ENCODE measurements at regions of chr18 and their contacts with region 1.

Region 1: DNA sequence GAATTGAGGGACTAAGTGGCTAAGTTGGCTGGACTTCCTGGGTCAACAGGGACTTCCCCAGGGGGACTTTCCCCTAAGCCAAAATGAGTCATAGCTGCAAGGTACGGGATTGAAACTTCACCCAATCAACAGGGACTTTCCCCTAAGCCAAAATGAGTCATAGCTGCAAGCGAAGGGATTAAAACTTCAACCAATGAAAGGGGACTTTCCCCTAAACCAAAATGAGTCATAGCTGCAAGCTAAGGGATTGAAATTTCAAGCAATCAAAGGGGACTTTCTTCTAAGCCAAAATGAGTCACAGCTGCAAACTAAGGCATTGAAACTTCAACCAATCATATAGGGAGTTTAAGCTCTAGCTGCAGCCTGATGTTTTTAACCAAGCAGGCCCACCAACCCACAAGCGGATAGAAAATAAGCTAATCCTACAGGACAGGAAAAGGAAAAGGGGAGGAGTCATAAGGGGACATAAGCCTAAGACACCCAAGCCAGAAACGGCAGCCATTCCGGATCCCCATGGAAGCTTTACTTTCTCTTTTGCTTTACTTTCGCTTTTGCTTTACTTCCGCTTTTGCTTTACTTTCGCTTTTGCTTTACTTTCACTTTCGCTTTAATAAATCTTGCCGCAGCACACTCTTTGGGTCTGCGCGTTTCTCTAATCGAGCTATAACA is 1375.4 kb upstream of the CELF4 start:
- DNase-seq: peak; percentile 89
- H3K4me3 Mint-ChIP-seq: peak overlapping the region; percentile 70
- H3K27ac Mint-ChIP-seq: peak overlapping the region; percentile 95
- H3K4me1 Mint-ChIP-seq: peaks cover 24% of the 10 kb centered on the region
- H3K27me3 Mint-ChIP-seq: no peaks in the 10 kb centered on the region

Region 2: DNA sequence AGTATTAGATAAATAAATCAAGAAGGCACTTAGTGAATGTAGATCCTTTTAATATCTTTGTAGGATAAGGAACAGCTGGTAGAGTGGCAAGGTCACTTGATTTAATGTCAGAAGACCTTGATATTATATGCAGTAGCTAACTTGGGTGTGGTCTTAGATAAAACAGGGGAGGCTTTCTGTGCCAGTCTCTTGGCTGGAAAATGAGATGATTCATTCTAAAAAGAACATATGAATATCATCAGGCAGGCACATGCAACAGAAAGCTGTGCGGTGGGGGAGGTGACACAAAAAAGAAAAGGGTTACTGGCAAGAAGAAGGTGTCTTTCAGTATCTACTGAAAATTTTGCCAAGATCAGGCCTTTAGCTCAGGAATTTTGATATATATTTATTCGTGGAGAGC is 443.7 kb before region 1 on chr18:
- intact Hi-C with region 1: loop called (anchors 2 kb)
- DNase-seq: no peak
- H3K4me3 Mint-ChIP-seq: no peak overlapping the region
- H3K27ac Mint-ChIP-seq: no peak overlapping the region
- H3K4me1 Mint-ChIP-seq: peaks cover 2% of the 10 kb centered on the region
- H3K27me3 Mint-ChIP-seq: no peaks in the 10 kb centered on the region

Region 3: GRCh38 chr18:38563396-38563980 is 377.5 kb before region 1 on chr18:
- intact Hi-C with region 1: loop called (anchors 5 kb)
- DNase-seq: no peak
- H3K4me3 Mint-ChIP-seq: no peak overlapping the region
- H3K27ac Mint-ChIP-seq: no peak overlapping the region
- H3K4me1 Mint-ChIP-seq: peaks cover 3% of the 10 kb centered on the region
- H3K27me3 Mint-ChIP-seq: no peaks in the 10 kb centered on the region

Region 4: GRCh38 chr18:38611036-38611964 is 329.7 kb before region 1 on chr18:
- intact Hi-C with region 1: loop called (anchors 1 kb)
- DNase-seq: peak; percentile 55
- H3K4me3 Mint-ChIP-seq: peak overlapping the region; percentile 10
- H3K27ac Mint-ChIP-seq: peak overlapping the region; percentile 84
- H3K4me1 Mint-ChIP-seq: peaks cover 3% of the 10 kb centered on the region
- H3K27me3 Mint-ChIP-seq: no peaks in the 10 kb centered on the region

Region 5: DNA sequence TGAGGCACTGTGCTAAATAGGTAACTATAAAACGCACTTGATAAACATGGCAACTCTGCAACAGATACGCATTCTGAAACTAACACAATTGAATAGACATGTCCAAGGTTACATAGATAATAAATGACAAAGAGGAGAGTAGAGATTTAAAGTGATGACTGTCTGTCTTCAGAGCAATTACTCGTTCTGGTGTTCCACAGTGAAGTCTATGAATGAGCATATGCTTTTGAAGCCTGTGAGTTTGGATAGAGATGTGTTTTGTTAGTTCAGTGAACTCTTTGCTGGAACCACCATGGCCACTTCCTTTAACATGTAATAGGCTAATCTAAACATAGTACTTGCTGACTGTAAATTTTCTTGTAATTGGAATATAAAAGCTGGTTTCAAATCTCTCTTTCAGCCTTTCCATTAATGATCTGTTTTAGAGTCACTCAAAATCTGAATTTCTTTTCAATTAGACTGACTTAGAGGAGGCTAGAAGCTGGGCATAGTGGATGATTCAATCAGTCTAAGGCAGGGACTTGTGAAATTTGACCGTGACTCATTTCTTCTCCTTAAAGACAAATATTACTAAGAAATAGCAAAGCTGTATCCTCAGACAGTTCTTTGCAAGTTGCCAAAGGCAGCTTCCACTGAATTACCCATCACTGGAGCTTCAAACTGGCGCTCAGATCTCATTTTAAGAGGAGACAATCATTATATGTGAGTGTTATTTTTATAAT is 245.3 kb before region 1 on chr18:
- intact Hi-C with region 1: loop called (anchors 10 kb)
- DNase-seq: no peak
- H3K4me3 Mint-ChIP-seq: no peak overlapping the region
- H3K27ac Mint-ChIP-seq: no peak overlapping the region
- H3K4me1 Mint-ChIP-seq: peaks cover 3% of the 10 kb centered on the region
- H3K27me3 Mint-ChIP-seq: no peaks in the 10 kb centered on the region

Region 6: GRCh38 chr18:38884050-38884449 is 56.9 kb before region 1 on chr18:
- intact Hi-C with region 1: loop called (anchors 10 kb)
- DNase-seq: no peak
- H3K4me3 Mint-ChIP-seq: no peak overlapping the region
- H3K27ac Mint-ChIP-seq: no peak overlapping the region
- H3K4me1 Mint-ChIP-seq: no peaks in the 10 kb centered on the region
- H3K27me3 Mint-ChIP-seq: no peaks in the 10 kb centered on the region

Measured in activated CD4-positive, alpha-beta T cell treated with anti-CD3 and anti-CD28 coated beads, Interleukin-2, amount 10 ng/mL, durations not matched to agents 24 days and 14 days (primary cell).